Activated B cell treated with CpG ODN at 0.5 μM for 24 hours (primary cell): ENCODE measurements at regions of chrX and their contacts with region 1.

Region 1: GRCh38 chrX:50100188-50100587 is 100.6 kb downstream of the AKAP4 start:
- DNase-seq: no peak
- ATAC-seq: no peak
- H3K4me3 Mint-ChIP-seq: no peak overlapping the region
- H3K27ac Mint-ChIP-seq: no peak overlapping the region
- H3K4me1 Mint-ChIP-seq: peaks cover 5% of the 10 kb centered on the region
- H3K27me3 Mint-ChIP-seq: no peaks in the 10 kb centered on the region
- CTCF ChIP-seq: no peak

Region 2: DNA sequence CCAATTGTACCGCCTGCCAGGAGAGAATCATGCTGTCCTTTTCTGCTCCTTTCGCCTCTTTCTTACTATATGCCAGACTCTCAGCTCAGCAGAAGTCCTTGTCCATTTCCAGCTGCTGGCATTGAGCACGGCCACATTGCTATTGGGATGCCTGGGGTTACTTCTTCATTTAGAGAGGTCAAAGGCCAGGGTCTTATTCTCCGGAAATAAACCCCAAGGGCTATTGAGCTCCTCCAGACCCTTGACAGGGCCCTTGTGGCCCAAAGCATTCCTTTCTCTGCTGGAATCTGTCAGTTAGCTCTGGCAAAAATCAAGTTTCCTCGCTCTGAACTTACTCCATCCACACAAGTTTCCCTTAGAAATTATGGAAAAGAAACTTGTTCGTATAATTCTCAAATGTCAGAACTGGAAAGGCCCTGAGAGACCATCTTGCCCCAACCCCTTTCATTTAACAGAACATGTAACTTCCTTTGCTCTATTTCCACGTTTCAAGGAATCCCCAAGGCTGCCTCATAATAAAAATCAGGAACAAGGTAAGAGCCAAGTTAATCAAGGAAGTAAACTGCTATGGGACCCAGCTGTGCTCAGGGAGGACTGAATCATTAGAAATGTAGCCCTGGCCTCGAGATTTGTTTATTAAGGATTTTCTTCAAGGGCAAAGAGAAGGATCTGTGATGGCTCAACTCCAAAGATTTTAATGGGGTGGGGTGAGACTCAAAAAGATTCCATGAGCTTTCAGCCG is 88.8 kb after region 1 on chrX:
- CTCF ChIA-PET with region 1: no interaction called
- POLR2A ChIA-PET with region 1: no interaction called
- intact Hi-C with region 1: no loop called
- DNase-seq: no peak
- ATAC-seq: no peak
- H3K4me3 Mint-ChIP-seq: no peak overlapping the region
- H3K27ac Mint-ChIP-seq: no peak overlapping the region
- H3K4me1 Mint-ChIP-seq: no peaks in the 10 kb centered on the region
- H3K27me3 Mint-ChIP-seq: peaks cover 4% of the 10 kb centered on the region
- CTCF ChIP-seq: no peak

Region 3: DNA sequence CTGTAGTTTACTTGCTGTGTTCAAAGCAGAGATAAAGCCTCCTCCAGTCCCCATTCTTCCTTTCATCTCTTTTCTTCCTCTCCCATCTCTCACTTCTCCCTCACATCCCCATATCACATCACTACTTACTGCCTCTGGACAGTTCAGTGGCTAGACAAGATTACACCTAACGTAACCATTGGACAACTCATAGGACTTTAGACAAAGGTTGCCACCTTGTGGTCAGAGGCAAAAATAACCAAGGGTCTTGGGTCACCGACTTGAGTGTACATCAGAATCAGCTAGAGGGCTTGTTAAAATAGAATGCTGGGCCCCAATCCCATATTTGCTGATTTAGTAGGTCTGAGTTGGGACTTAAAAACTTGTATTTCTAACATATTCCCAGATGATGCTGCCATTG is 479.8 kb after region 1 on chrX:
- CTCF ChIA-PET with region 1: interaction called, 13 read pairs
- POLR2A ChIA-PET with region 1: no interaction called
- intact Hi-C with region 1: no loop called
- DNase-seq: no peak
- ATAC-seq: no peak
- H3K4me3 Mint-ChIP-seq: no peak overlapping the region
- H3K27ac Mint-ChIP-seq: no peak overlapping the region
- H3K4me1 Mint-ChIP-seq: no peaks in the 10 kb centered on the region
- H3K27me3 Mint-ChIP-seq: peaks cover 2% of the 10 kb centered on the region
- CTCF ChIP-seq: no peak